ENCODE measurements at regions of chr21 and their contacts with region 1.

Region 1: GRCh38 chr21:34926803-34927467 is 122.2 kb downstream of the RUNX1 start:
- DNase-seq: peak in 2 of 5 donors; percentile 34 to 65
- H3K4me3 ChIP-seq: peak overlapping the region in 1 of 3 donors; percentile 11
- H3K27ac ChIP-seq: no peak overlapping the region
- H3K4me1 ChIP-seq: peaks cover 0 to 2% (median 0%) of the 10 kb centered on the region in 3 donors
- H3K27me3 ChIP-seq: no peaks in the 10 kb centered on the region
- CTCF ChIP-seq: no peak

Region 2: DNA sequence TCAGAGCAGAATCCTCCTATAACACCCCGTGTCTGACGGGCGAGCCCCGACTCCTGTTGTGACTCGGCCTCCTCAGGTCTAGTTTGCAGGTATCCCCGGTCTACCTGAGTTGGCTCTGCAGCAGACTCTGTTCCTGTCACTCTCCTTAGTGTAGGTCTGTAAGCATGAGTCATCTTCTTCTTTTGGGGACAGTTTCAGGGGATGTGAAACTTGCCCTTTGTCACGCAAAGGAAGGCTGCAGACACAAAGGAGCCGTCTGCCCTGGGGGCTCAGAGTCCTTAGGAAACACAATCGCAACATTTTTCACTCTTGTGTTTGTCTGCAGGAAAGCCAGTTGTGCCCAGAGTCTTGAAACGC is 61.0 kb before region 1 on chr21:
- intact Hi-C with region 1: no loop called
- DNase-seq: no peak
- H3K4me3 ChIP-seq: no peak overlapping the region
- H3K27ac ChIP-seq: no peak overlapping the region
- H3K4me1 ChIP-seq: peaks cover 0 to 5% (median 2%) of the 10 kb centered on the region in 3 donors
- H3K27me3 ChIP-seq: no peaks in the 10 kb centered on the region
- CTCF ChIP-seq: no peak

Region 3: DNA sequence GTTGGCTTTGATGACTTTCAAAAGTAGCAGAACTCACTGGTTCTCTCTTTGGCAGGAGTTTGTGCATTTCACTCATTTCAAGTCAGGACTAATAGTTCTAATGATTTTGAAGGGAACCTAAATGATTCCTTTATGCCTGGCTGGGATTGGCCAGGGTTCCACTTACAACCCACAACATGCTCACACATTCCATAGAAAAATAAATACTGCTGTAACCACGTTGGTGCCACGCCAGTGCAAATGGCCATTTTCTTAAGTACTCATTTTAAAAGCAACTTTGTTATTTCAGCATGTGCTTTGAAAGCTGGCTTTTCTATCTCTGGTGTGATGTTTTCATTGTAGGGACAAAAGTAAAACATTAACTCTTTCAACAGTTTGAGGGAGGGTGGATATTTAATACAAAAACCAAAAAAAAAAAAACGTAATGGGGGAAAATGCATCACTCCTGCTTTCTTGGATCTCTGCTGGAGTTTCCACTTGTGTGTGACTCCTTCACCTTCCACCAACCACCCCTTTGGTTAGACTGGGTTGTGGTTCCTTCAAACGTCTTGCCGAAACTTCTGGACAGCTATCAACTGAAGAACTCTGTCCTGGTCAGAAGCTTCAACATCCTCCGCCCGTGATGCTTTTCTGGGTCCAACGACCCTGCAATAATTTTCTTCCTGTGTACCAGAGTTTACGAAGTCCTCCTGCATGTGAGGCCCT is 422.6 kb after region 1 on chr21:
- intact Hi-C with region 1: loop called (anchors 5 kb)
- DNase-seq: no peak
- H3K4me3 ChIP-seq: no peak overlapping the region
- H3K27ac ChIP-seq: no peak overlapping the region
- H3K4me1 ChIP-seq: no peaks in the 10 kb centered on the region
- H3K27me3 ChIP-seq: no peaks in the 10 kb centered on the region
- CTCF ChIP-seq: no peak